ENCODE measurements at regions of chr7 and their contacts with region 1.

Region 1: GRCh38 chr7:98913612-98914011 is 35.3 kb downstream of the TRRAP start:
- DNase-seq: no peak
- H3K4me3 Mint-ChIP-seq: no peak overlapping the region
- H3K27ac Mint-ChIP-seq: no peak overlapping the region
- H3K4me1 Mint-ChIP-seq: no peaks in the 10 kb centered on the region
- H3K27me3 Mint-ChIP-seq: no peaks in the 10 kb centered on the region
- CTCF ChIP-seq: no peak

Region 2: GRCh38 chr7:98902523-98902922 is 11.1 kb before region 1 on chr7:
- CTCF ChIA-PET with region 1: no interaction called
- intact Hi-C with region 1: no loop called
- DNase-seq: no peak
- H3K4me3 Mint-ChIP-seq: no peak overlapping the region
- H3K27ac Mint-ChIP-seq: no peak overlapping the region
- H3K4me1 Mint-ChIP-seq: no peaks in the 10 kb centered on the region
- H3K27me3 Mint-ChIP-seq: no peaks in the 10 kb centered on the region
- CTCF ChIP-seq: no peak

Region 3: DNA sequence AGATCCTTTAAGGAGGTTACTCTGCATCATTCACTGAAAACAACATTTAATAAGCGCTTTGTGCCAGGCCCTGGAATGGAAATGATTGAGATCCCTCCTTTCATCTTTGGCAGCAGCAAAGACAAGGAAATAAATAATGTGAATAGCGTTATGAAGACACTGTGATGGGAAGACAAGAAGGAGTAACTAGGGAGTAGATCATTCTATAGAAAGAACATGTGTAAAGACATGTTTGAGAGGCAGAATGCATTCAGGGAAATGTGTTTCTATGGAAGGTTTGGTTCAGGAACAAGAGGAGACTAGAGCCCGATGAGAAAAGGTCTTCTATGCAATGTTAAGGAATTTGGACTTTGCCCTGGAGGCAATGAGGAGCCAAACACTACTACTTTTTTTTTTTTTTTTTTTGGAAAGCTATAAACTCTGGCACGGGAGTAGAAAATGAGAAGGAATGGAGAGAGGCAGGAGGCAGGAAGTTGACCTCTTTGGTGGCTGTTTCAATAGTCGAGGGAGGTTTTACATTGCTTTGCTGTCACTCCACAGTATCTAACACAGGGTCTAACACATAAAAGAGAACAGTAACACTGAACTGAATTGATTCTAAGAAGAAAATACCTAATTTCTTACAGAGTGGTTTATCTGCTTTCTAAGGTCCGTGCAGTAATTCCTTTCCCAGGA is 185.3 kb after region 1 on chr7:
- CTCF ChIA-PET with region 1: no interaction called
- intact Hi-C with region 1: no loop called
- DNase-seq: peak; percentile 21
- H3K4me3 Mint-ChIP-seq: peak overlapping the region; percentile 11
- H3K27ac Mint-ChIP-seq: peak overlapping the region; percentile 2
- H3K4me1 Mint-ChIP-seq: peaks cover 24% of the 10 kb centered on the region
- H3K27me3 Mint-ChIP-seq: no peaks in the 10 kb centered on the region
- CTCF ChIP-seq: no peak

Region 4: DNA sequence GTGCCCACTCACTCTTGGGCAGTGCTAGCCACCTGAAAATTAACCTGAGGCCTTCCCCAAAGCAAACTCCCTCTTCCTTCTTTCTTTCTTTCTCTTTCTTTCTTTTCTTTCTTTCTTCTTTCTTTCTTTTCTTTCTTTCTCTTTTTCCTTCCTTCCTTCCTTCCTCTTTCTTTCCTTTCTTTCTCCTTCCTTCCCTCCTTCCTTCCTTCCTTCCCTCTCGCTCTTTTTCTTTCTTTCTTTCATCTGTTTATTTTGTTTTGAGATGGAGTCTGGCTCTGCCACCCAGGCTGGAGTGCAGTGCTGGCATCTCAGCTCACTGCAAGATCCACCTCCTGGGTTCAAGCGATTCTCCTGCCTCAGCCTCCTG is 311.3 kb after region 1 on chr7:
- CTCF ChIA-PET with region 1: interaction called, 10 read pairs
- intact Hi-C with region 1: no loop called
- DNase-seq: no peak
- H3K4me3 Mint-ChIP-seq: peak overlapping the region; percentile 22
- H3K27ac Mint-ChIP-seq: peak overlapping the region; percentile 89
- H3K4me1 Mint-ChIP-seq: peaks cover 10% of the 10 kb centered on the region
- H3K27me3 Mint-ChIP-seq: no peaks in the 10 kb centered on the region
- CTCF ChIP-seq: no peak